ENCODE measurements at regions of chr1 and their contacts with region 1.

Region 1: DNA sequence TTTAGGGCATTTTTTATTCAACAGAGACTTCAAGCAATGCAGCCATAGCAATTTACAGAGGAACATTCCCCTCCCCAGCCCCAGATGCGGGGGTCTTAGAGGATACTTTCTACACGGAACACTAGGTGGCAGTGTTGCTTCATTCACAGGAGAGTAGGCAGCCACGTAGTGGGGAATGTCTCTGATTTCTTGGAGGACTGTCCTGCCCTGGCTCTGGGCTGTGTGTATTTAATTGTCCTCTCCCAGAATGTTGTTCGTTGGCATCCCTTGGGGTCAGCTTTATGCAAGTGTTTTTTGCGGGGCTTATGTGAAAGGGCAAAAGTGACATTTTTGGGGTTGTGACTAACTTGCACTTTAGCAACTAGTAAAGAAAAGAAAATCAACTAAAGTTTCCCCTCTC is 96.9 kb downstream of the PAPPA2 start:
- DNase-seq: peak; percentile 33
- ATAC-seq: peak; percentile 95
- H3K4me3 ChIP-seq: no peak overlapping the region
- H3K27ac ChIP-seq: no peak overlapping the region
- H3K4me1 ChIP-seq: no peaks in the 10 kb centered on the region
- H3K27me3 ChIP-seq: no peaks in the 10 kb centered on the region
- CTCF ChIP-seq: peak; percentile 90

Region 2: DNA sequence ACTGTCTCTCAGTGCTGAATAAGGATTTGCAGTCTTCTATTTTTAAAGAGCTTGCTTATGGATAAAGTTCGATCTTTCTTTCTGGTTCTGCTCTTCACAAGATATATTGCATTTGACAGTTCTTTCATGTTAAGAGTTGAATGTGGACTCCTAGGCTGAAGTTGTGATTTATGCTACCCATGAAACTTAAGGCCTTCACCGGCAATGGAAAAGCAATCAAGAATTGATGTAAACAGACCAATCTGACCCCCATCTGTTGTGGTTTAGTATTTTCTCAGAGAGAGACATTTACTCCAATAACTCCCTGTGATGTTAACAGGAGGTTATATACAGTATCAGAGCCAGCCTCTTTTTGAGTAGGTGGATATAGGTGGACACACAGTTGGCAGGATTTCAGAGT is 68.9 kb after region 1 on chr1:
- CTCF ChIA-PET with region 1: no interaction called
- POLR2A ChIA-PET with region 1: no interaction called
- in situ Hi-C with region 1: no loop called
- intact Hi-C with region 1: no loop called
- DNase-seq: no peak
- ATAC-seq: no peak
- H3K4me3 ChIP-seq: no peak overlapping the region
- H3K27ac ChIP-seq: no peak overlapping the region
- H3K4me1 ChIP-seq: no peaks in the 10 kb centered on the region
- H3K27me3 ChIP-seq: no peaks in the 10 kb centered on the region
- CTCF ChIP-seq: no peak

Region 3: GRCh38 chr1:176691251-176692228 is 131.7 kb after region 1 on chr1:
- CTCF ChIA-PET with region 1: interaction called, 3 read pairs
- POLR2A ChIA-PET with region 1: no interaction called
- in situ Hi-C with region 1: no loop called
- intact Hi-C with region 1: loop called (anchors 1 kb)
- DNase-seq: peak; percentile 35
- ATAC-seq: peak; percentile 72; the same call in 1 of the 2 replicates
- H3K4me3 ChIP-seq: no peak overlapping the region
- H3K27ac ChIP-seq: no peak overlapping the region
- H3K4me1 ChIP-seq: no peaks in the 10 kb centered on the region
- H3K27me3 ChIP-seq: 0 out of 2 replicates have a peak, but pooled peaks cover 2% of the 10 kb centered on the region
- CTCF ChIP-seq: peak; percentile 81

Region 4: GRCh38 chr1:176843352-176844297 is 283.7 kb after region 1 on chr1:
- CTCF ChIA-PET with region 1: no interaction called
- POLR2A ChIA-PET with region 1: no interaction called
- in situ Hi-C with region 1: no loop called
- intact Hi-C with region 1: loop called (anchors 10 kb)
- DNase-seq: peak; percentile 1
- ATAC-seq: no peak
- H3K4me3 ChIP-seq: no peak overlapping the region
- H3K27ac ChIP-seq: no peak overlapping the region
- H3K4me1 ChIP-seq: no peaks in the 10 kb centered on the region
- H3K27me3 ChIP-seq: 0 out of 2 replicates have a peak, but pooled peaks cover 6% of the 10 kb centered on the region
- CTCF ChIP-seq: peak; percentile 54

Region 5: DNA sequence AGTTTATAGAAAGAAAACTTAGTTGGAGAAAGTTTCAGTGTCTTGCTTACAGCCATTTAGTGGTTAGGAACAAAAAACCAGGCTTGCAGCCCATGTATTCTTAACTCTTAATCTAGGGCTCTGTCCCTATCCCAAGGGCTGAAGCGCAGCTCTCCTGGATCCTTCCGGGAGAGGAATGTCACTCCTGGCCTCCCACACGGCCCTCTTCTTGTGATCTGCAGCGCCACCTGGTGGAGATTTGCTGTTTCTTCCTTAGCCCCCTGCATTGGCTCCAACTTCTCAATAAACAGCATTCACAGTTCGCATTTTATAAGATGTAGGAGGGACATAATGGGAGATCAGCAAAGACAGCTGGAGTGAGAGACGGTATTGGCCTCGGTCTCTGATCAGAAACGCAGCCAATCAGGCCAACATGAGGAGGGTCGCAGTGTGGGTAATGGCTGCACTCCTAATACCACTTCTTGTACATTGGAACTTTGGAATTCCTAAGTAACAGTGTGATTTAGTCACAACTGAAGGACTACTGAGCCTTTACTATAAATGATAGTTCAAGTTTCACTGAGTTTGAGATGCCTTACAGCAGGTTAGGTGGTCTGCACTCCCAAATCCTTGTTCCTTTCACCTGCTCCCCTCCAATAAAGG is 321.2 kb after region 1 on chr1:
- CTCF ChIA-PET with region 1: no interaction called
- POLR2A ChIA-PET with region 1: no interaction called
- in situ Hi-C with region 1: no loop called
- intact Hi-C with region 1: loop called (anchors 1 kb)
- DNase-seq: peak; percentile 43
- ATAC-seq: peak; percentile 96
- H3K4me3 ChIP-seq: no peak overlapping the region
- H3K27ac ChIP-seq: no peak overlapping the region
- H3K4me1 ChIP-seq: no peaks in the 10 kb centered on the region
- H3K27me3 ChIP-seq: peaks cover 2% of the 10 kb centered on the region; the same call in 1 of the 2 replicates
- CTCF ChIP-seq: peak; percentile 84